PC-9 (cell line): ENCODE measurements at regions of chr6 and their contacts with region 1.

Region 1: DNA sequence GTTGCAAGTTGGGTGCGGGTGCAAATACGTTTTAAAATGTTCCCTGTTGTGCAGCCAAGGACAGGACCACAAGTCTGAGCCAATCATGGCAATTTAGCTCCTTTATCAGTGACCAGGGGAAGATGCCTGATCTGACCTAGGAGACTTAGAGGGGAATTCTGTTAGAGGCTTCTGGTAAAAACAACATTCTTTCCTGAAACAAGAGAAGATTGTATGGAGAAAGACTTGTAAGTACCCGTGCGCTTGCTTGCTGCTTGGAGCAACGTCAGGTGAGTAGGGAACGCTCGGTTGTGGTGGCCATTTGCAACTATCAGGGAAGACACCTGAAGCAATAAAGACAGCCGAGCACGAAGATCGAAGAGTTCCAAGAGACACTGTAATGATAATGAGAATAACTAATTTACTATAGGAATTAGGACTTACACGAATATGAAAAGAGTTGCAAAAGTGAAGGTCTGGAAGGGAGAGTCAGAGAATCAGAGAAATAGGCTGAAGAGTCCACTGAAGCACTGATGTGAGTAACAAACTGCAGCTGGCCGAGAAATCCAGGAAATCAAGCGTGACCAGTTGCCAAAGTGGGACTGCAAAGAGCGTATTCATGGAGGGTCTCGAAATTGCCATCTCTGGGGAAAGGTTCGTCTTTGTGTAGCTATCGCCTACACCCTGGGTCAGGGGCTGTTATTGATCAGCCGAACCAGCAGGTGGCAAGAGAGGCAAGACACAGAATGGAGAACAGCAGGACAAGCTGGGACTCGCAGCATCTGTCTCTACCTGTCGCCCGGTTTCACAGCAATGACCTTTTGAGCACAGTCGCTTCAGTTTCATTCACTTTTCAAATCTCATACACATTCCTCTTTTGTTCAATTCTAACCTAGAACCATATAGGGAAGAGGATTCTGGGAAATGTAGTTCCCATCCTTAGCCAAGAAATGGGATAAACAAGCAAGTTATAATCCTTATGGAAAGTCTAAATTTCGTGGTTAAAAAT is 26.1 kb downstream of the LOC128125822 start:
- DNase-seq: peak; percentile 57 to 66
- H3K4me3 ChIP-seq: peak overlapping the region; percentile 57
- H3K27ac ChIP-seq: no peak overlapping the region
- H3K4me1 ChIP-seq: peaks cover 7% of the 10 kb centered on the region
- H3K27me3 ChIP-seq: no peaks in the 10 kb centered on the region
- CTCF ChIP-seq: peak; percentile 89

Region 2: GRCh38 chr6:63245909-63246308 is 352.4 kb before region 1 on chr6:
- CTCF ChIA-PET with region 1: no interaction called
- POLR2A ChIA-PET with region 1: no interaction called
- intact Hi-C with region 1: no loop called
- DNase-seq: no peak
- H3K4me3 ChIP-seq: no peak overlapping the region
- H3K27ac ChIP-seq: no peak overlapping the region
- H3K4me1 ChIP-seq: no peaks in the 10 kb centered on the region
- H3K27me3 ChIP-seq: no peaks in the 10 kb centered on the region
- CTCF ChIP-seq: peak; percentile 34; the same call in 1 of the 2 replicates

Region 3: DNA sequence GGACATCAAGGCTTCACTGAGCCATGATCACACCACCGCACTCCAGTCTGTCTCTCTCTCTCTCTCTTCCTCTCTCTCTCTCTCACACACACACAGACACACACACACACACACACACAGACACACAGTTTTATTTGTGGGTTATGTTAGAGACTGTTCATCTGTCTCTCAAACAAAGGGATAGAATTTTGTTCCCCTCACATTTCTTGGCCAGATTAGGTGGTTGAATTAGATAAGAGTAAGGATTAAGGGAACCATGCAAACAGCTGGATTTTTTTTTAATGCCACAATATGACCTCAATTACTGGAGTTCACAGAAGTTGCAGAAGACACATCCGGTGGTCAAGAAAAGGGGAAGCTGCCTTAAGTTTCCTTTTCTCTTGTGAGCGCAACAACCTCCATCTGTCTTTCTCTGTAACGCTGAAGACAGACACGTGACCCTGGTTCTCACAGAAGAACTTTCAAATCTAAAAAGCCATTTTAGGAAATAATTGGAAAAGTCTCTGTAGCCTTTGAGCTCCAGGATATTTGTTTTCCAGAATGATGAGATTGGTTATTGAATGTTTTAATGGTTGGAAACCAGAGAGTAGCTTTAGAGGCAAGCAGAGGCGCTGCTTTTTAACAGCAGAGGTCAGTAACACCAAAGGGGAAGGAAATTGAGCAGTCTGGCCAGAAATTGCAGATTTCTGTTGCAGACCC is 245.6 kb before region 1 on chr6:
- CTCF ChIA-PET with region 1: interaction called, 18 read pairs
- POLR2A ChIA-PET with region 1: interaction called, 5 read pairs
- intact Hi-C with region 1: loop called (anchors 1 kb)
- DNase-seq: peak in 1 of 2 experiments; percentile 39
- H3K4me3 ChIP-seq: no peak overlapping the region
- H3K27ac ChIP-seq: no peak overlapping the region
- H3K4me1 ChIP-seq: peaks cover 12% of the 10 kb centered on the region
- H3K27me3 ChIP-seq: no peaks in the 10 kb centered on the region
- CTCF ChIP-seq: peak; percentile 71

Region 4: DNA sequence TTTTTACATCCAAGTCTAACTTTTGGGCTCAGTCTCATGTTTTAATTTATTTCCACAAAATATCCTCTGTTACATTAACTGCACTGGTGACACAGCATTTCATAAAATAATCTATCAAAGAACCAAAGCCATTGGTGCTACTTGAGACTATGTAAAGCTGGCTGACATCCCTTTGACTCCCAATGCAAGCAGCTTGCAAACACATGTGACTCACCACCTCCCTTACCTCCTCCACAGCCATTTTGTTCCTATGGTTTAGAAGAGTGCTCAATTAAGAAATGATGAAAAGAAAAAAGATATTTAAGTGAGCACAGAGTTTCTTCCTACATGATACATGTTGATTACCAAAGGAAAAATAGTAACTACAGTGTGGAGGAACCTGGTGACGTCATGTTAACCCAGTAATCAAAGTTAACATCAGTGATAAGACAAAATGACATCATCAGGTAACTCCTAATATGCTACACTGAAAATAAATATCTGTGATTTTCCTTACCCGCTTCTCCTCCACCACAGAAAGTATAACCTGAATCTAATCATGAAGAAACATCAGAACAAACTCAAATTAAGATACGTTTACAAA is 225.3 kb before region 1 on chr6:
- CTCF ChIA-PET with region 1: no interaction called
- POLR2A ChIA-PET with region 1: no interaction called
- intact Hi-C with region 1: no loop called
- DNase-seq: no peak
- H3K4me3 ChIP-seq: no peak overlapping the region
- H3K27ac ChIP-seq: no peak overlapping the region
- H3K4me1 ChIP-seq: no peaks in the 10 kb centered on the region
- H3K27me3 ChIP-seq: no peaks in the 10 kb centered on the region
- CTCF ChIP-seq: no peak

Region 5: GRCh38 chr6:63635588-63636517 is 37.5 kb after region 1 on chr6 and contains the start of gene PHF3:
- CTCF ChIA-PET with region 1: interaction called, 5 read pairs
- POLR2A ChIA-PET with region 1: interaction called, 9 read pairs
- intact Hi-C with region 1: loop called (anchors 2 kb)
- DNase-seq: peak; percentile 61 to 92
- H3K4me3 ChIP-seq: peak within 1 kb of the TSS; percentile 68
- H3K27ac ChIP-seq: peak within 1 kb of the TSS; percentile 73
- H3K4me1 ChIP-seq: peaks cover 37% of the 10 kb centered on the region
- H3K27me3 ChIP-seq: no peaks in the 10 kb centered on the region
- CTCF ChIP-seq: no peak; the same call in 1 of the 2 replicates
- total RNA-seq, gene PHF3: 59.8 and 67.1 TPM in 2 replicates

Region 6: DNA sequence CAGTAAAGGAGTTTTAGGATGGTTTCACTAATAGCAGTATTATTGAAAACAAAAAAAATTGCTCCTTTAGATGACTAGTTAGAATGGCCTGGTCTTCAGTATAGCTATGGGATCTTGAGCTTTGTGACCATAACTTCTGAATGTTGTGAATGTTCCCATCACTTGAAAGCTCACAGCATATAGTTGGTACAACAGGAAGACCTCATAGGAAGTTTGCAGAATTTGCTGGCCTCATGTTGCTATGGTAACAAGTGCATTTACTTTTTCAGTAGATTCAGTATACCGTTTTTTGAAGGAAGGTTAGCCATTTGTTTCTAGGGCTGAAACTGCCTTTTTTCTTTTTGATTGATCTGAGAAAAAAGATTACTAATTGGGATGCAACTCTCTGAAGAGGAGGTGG is 45.5 kb after region 1 on chr6:
- CTCF ChIA-PET with region 1: no interaction called
- POLR2A ChIA-PET with region 1: interaction called, 12 read pairs
- intact Hi-C with region 1: no loop called
- DNase-seq: no peak
- H3K4me3 ChIP-seq: no peak overlapping the region
- H3K27ac ChIP-seq: no peak overlapping the region
- H3K4me1 ChIP-seq: peaks cover 17% of the 10 kb centered on the region
- H3K27me3 ChIP-seq: no peaks in the 10 kb centered on the region
- CTCF ChIP-seq: no peak

Region 7: GRCh38 chr6:63660757-63661156 is 62.4 kb after region 1 on chr6:
- CTCF ChIA-PET with region 1: no interaction called
- POLR2A ChIA-PET with region 1: no interaction called
- intact Hi-C with region 1: no loop called
- DNase-seq: no peak
- H3K4me3 ChIP-seq: no peak overlapping the region
- H3K27ac ChIP-seq: no peak overlapping the region
- H3K4me1 ChIP-seq: no peaks in the 10 kb centered on the region
- H3K27me3 ChIP-seq: no peaks in the 10 kb centered on the region
- CTCF ChIP-seq: no peak

Region 8: DNA sequence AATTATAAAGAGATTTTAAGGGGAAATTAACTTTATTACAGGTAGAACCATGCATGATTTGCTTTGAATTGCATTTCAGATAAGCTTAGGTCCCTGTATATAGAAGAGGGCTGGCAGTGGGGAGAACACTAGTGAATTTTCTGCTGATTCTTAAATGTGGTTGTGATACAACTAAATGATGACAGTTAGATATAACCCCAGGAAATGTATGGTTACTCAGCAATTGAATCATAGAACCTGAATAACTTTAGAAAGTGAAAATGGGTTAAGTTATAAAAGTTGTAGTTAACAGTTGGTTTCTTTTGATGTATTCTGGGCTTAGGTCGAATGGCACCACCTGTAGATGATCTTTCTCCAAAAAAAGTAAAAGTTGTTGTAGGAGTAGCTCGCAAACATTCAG is 107.4 kb after region 1 on chr6:
- CTCF ChIA-PET with region 1: no interaction called
- POLR2A ChIA-PET with region 1: no interaction called
- intact Hi-C with region 1: loop called (anchors 5 kb)
- DNase-seq: no peak
- H3K4me3 ChIP-seq: no peak overlapping the region
- H3K27ac ChIP-seq: no peak overlapping the region
- H3K4me1 ChIP-seq: no peaks in the 10 kb centered on the region
- H3K27me3 ChIP-seq: no peaks in the 10 kb centered on the region
- CTCF ChIP-seq: no peak

Region 9: GRCh38 chr6:63732336-63732735 is 134.0 kb after region 1 on chr6:
- CTCF ChIA-PET with region 1: no interaction called
- POLR2A ChIA-PET with region 1: no interaction called
- intact Hi-C with region 1: no loop called
- DNase-seq: peak in 1 of 2 experiments; percentile 70
- H3K4me3 ChIP-seq: no peak overlapping the region
- H3K27ac ChIP-seq: peak overlapping the region; percentile 15; the same call in 1 of the 2 replicates
- H3K4me1 ChIP-seq: peaks cover 19% of the 10 kb centered on the region
- H3K27me3 ChIP-seq: no peaks in the 10 kb centered on the region
- CTCF ChIP-seq: no peak

Region 10: DNA sequence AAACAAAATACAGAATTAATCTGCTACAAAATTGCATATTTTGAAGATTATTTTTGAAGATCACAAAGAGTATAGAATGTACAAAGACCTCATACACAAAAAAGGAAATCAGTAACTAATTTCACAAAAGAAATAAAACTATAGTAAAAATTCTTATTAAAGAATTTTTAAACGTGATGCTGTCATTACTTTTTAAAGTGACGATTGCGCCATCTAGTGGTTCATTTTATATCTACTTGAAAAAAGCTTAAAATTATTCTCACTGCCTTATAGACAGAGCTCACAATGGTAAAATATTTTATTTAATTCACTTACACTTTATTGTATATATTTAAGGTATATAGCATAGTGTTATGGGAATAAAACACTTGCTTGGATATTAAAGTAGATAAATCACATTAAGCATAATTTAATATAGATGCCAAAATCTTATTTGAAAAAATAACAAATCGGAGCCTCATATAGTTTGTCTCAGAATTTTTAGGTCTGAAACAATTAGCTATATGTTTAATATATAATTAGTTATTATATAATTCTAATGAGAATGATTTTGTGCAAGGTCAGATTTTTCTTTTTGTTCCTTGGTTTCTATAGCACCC is 166.1 kb after region 1 on chr6:
- CTCF ChIA-PET with region 1: interaction called, 14 read pairs
- POLR2A ChIA-PET with region 1: no interaction called
- intact Hi-C with region 1: loop called (anchors 1 kb)
- DNase-seq: no peak
- H3K4me3 ChIP-seq: no peak overlapping the region
- H3K27ac ChIP-seq: no peak overlapping the region
- H3K4me1 ChIP-seq: no peaks in the 10 kb centered on the region
- H3K27me3 ChIP-seq: no peaks in the 10 kb centered on the region
- CTCF ChIP-seq: peak; percentile 79